Left lung (tissue), 14 donors: ENCODE measurements at regions of chr16 and their contacts with region 1.

Region 1: DNA sequence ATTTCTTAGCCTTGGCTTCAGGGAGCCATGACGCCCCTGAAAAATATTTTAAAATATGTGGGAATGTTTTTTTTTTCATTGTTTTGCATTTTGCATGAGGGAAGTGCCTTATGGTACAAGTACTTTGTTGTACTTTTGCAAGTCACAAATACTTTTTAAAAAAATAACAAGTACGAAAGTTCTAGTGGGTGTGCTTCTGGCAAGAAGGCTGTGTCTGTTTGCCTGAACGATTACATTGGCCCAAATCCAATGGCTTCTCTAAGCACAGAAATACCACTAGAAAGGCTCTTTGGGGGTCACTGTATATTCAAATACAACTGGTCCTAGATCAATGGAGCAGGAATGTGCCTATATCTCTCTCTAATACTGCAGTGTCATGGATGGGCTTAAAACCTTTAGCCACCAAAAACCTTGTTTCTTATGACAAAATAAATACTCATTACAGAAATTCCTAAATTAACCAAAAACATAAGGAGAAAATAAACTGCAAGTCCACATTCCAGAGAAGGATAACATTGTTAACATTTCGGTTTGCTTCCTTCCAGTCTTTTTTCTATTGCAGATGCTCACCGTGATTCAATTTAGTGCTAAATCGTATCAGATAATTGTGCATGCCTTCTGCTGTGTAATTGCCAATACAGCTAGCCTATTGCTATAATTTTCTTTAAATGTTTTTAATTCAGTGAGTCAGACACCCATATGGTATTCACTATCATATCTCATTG is 97.4 kb downstream of the VAT1L start:
- DNase-seq: no peak
- ATAC-seq: no peak
- H3K4me3 ChIP-seq: no peak overlapping the region
- H3K27ac ChIP-seq: no peak overlapping the region
- H3K4me1 ChIP-seq: no peaks in the 10 kb centered on the region
- H3K27me3 ChIP-seq: no peaks in the 10 kb centered on the region
- CTCF ChIP-seq: no peak

Region 2: DNA sequence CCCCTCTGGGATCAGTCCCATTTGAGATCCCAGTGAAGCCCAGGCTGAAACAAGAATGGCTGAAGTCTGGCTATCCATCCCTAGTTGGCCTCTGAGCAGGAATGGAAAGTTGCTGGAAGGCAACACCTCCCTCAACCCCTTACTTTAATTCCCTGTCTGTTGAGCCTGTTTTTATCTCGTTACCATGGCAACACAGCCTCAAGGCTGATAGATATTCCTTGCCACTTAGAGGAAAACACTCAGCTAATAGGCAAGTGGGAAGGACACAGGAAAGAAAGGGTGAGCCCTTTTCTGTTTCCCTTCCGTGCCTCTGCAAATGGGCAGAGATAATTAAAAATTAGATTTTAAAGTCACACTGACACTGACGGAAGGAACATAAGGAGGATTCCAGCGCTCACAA is 61.1 kb after region 1 on chr16:
- intact Hi-C with region 1: loop called in 1 of 2 experiments (anchors 10 kb)
- DNase-seq: peak in 1 of 4 donors; percentile 32
- ATAC-seq: no peak
- H3K4me3 ChIP-seq: no peak overlapping the region
- H3K27ac ChIP-seq: no peak overlapping the region
- H3K4me1 ChIP-seq: no peaks in the 10 kb centered on the region
- H3K27me3 ChIP-seq: peaks cover 0 to 16% of the 10 kb centered on the region in 2 donors
- CTCF ChIP-seq: no peak